Naive thymus-derived CD8-positive, alpha-beta T cell (primary cell): ENCODE measurements at regions of chr9 and their contacts with region 1.

Region 1: GRCh38 chr9:127224178-127224882 is 40.2 kb upstream of the GARNL3 start:
- DNase-seq: peak; percentile 78 to 91 (median 86)
- ATAC-seq: peak; percentile 69 to 82
- H3K4me3 Mint-ChIP-seq: peak overlapping the region; percentile 77 to 91 (median 87)
- H3K27ac Mint-ChIP-seq: peak overlapping the region; percentile 62 to 98 (median 84)
- H3K4me1 Mint-ChIP-seq: peaks cover 22 to 48% (median 39%) of the 10 kb centered on the region in 4 donors
- H3K27me3 Mint-ChIP-seq: peaks cover 3 to 9% (median 5%) of the 10 kb centered on the region in 5 donors

Region 2: GRCh38 chr9:127277099-127277498 is 52.8 kb after region 1 on chr9:
- POLR2A ChIA-PET with region 1: no interaction called
- DNase-seq: no peak
- ATAC-seq: no peak
- H3K4me3 Mint-ChIP-seq: peak overlapping the region in 1 of 10 donors; percentile 20
- H3K27ac Mint-ChIP-seq: peak overlapping the region in 1 of 10 donors; percentile 55
- H3K4me1 Mint-ChIP-seq: peaks cover 0 to 14% (median 0%) of the 10 kb centered on the region in 4 donors
- H3K27me3 Mint-ChIP-seq: peaks cover 9 to 52% (median 20%) of the 10 kb centered on the region in 5 donors

Region 3: GRCh38 chr9:127388037-127388855 is 163.9 kb after region 1 on chr9:
- POLR2A ChIA-PET with region 1: interaction called, 10 read pairs
- DNase-seq: peak; percentile 64 to 98 (median 92)
- ATAC-seq: peak; percentile 98
- H3K4me3 Mint-ChIP-seq: peak overlapping the region; percentile 0 to 86 (median 34)
- H3K27ac Mint-ChIP-seq: peak overlapping the region; percentile 9 to 90 (median 60)
- H3K4me1 Mint-ChIP-seq: peaks cover 20 to 35% (median 26%) of the 10 kb centered on the region in 4 donors
- H3K27me3 Mint-ChIP-seq: peaks cover 52 to 80% (median 61%) of the 10 kb centered on the region in 5 donors

Region 4: DNA sequence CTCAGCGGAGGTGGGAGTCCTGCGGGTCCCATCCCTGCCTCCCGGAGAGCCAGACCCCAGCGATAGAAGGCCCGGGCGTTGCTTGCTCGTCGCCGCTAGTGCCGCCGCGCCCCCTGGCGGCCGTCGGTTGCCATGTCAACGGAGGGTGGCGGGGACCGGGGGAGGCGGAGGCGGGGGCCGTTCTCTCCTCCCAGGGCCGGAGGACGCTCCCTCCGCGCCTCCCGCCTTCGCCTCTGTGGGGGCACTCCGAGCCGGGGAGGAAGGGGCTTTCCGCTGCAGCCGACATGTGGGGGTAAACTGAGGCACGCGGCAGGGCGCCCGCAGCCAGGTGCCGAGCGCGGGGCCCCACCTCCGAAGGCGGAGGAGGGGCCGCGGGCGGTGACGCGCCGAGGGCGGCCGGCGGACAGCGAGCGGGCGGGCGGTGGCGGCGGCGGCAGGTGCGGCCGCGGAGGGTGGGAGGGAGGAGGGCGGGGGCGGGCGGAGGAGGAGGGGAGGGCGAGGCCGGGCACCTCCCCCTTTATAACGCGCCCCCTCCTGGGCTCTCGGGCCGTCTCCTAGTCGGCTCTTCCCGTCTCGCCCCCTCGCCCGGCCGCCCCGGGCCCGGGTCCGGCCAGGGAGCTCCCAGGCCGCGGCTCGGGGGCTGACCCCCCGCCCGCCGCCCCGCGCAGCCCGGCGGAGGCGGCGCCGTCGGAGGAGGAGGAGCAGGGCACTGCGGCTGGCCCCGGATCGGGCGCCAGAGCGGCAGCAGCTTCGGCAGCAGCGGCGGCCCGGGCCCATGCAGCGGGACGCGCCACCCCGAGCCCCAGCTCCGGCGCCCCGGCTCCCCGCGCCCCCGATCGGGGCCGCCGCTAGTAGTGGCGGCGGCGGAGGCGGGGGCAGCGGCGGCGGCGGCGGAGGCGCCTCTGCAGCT is 560.9 kb after region 1 on chr9:
- POLR2A ChIA-PET with region 1: no interaction called
- DNase-seq: peak; percentile 84 to 95 (median 91)
- ATAC-seq: peak; percentile 54 to 56
- H3K4me3 Mint-ChIP-seq: peak overlapping the region; percentile 71 to 92 (median 88)
- H3K27ac Mint-ChIP-seq: peak overlapping the region; percentile 93 to 99 (median 97)
- H3K4me1 Mint-ChIP-seq: peaks cover 29 to 74% (median 60%) of the 10 kb centered on the region in 4 donors
- H3K27me3 Mint-ChIP-seq: no peaks in the 10 kb centered on the region